Activated naive CD4-positive, alpha-beta T cell treated with anti-CD3 and anti-CD28 coated beads for 36 hours (primary cell): ENCODE measurements at regions of chr14 and their contacts with region 1.

Region 1: DNA sequence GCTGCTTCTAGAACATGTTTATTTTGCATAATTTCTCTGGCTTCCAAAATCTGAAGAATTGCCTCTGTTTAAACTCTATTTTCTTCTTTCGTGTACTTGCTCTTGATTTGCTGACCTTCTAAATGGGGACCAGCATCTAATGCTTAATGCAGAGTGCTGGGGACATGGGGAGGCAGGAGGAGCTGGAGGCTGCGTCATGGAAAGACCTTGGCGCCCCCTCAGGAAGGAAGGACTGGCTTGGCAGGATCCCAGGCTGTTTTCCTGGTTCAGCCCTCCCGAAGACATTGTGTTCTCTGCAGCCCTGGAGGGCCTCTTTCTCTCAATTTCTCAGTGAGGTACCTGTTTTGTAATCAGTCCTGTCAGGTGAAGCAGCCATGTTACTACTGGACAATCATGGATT is 5.5 kb downstream of the PRKCH start:
- DNase-seq: no peak
- H3K4me3 Mint-ChIP-seq: peak overlapping the region; percentile 63
- H3K27ac Mint-ChIP-seq: peak overlapping the region; percentile 95
- H3K4me1 Mint-ChIP-seq: peaks cover 70% of the 10 kb centered on the region
- H3K27me3 Mint-ChIP-seq: no peaks in the 10 kb centered on the region

Region 2: GRCh38 chr14:60488175-60488574 is 838.7 kb before region 1 on chr14:
- CTCF ChIA-PET with region 1: no interaction called
- intact Hi-C with region 1: no loop called
- DNase-seq: no peak
- H3K4me3 Mint-ChIP-seq: no peak overlapping the region
- H3K27ac Mint-ChIP-seq: no peak overlapping the region
- H3K4me1 Mint-ChIP-seq: peaks cover 2% of the 10 kb centered on the region
- H3K27me3 Mint-ChIP-seq: peaks cover 25% of the 10 kb centered on the region

Region 3: GRCh38 chr14:61280526-61281185 is 46.2 kb before region 1 on chr14:
- CTCF ChIA-PET with region 1: no interaction called
- intact Hi-C with region 1: no loop called
- DNase-seq: peak; percentile 81
- H3K4me3 Mint-ChIP-seq: peak overlapping the region; percentile 88
- H3K27ac Mint-ChIP-seq: peak overlapping the region; percentile 67
- H3K4me1 Mint-ChIP-seq: peaks cover 29% of the 10 kb centered on the region
- H3K27me3 Mint-ChIP-seq: no peaks in the 10 kb centered on the region

Region 4: GRCh38 chr14:61342486-61342885 is 15.6 kb after region 1 on chr14:
- CTCF ChIA-PET with region 1: interaction called, 4 read pairs
- intact Hi-C with region 1: loop called (anchors 1 kb)
- DNase-seq: peak; percentile 86
- H3K4me3 Mint-ChIP-seq: peak overlapping the region; percentile 66
- H3K27ac Mint-ChIP-seq: peak overlapping the region; percentile 97
- H3K4me1 Mint-ChIP-seq: peaks cover 96% of the 10 kb centered on the region
- H3K27me3 Mint-ChIP-seq: no peaks in the 10 kb centered on the region

Region 5: GRCh38 chr14:61368114-61368726 is 41.4 kb after region 1 on chr14:
- CTCF ChIA-PET with region 1: no interaction called
- intact Hi-C with region 1: no loop called
- DNase-seq: no peak
- H3K4me3 Mint-ChIP-seq: no peak overlapping the region
- H3K27ac Mint-ChIP-seq: peak overlapping the region; percentile 56
- H3K4me1 Mint-ChIP-seq: peaks cover 52% of the 10 kb centered on the region
- H3K27me3 Mint-ChIP-seq: no peaks in the 10 kb centered on the region

Region 6: GRCh38 chr14:61403411-61403810 is 76.6 kb after region 1 on chr14:
- CTCF ChIA-PET with region 1: no interaction called
- intact Hi-C with region 1: loop called (anchors 1 kb)
- DNase-seq: no peak
- H3K4me3 Mint-ChIP-seq: peak overlapping the region; percentile 63
- H3K27ac Mint-ChIP-seq: peak overlapping the region; percentile 91
- H3K4me1 Mint-ChIP-seq: peaks cover 86% of the 10 kb centered on the region
- H3K27me3 Mint-ChIP-seq: no peaks in the 10 kb centered on the region

Region 7: DNA sequence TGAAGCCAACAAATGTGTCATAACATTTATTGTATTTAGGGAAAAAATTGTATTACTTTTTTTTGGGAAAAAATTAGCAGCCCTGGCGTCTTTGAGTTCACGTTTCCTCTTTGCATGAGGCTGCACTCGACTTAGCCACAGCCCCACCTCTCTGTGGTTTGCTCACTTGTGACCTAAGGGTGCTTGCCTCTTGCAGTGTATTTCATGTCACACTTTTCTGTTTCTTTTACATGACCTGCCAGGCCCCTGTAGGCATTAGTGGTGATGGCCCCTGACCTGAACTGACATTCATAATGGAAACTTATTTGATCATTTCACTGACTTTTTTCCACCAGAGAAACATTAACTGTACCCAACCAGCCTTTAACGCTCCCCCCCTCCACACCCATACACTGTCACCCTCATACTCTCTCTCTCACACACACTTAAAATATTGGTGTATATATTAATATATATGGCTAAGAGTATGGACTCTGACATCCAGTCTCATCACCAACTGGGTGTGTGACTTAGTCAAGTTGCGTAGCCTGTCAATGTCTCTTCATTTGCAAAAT is 117.4 kb after region 1 on chr14:
- CTCF ChIA-PET with region 1: no interaction called
- intact Hi-C with region 1: loop called (anchors 1 kb)
- DNase-seq: peak; percentile 90
- H3K4me3 Mint-ChIP-seq: peak overlapping the region; percentile 66
- H3K27ac Mint-ChIP-seq: peak overlapping the region; percentile 96
- H3K4me1 Mint-ChIP-seq: peaks cover 93% of the 10 kb centered on the region
- H3K27me3 Mint-ChIP-seq: no peaks in the 10 kb centered on the region

Region 8: DNA sequence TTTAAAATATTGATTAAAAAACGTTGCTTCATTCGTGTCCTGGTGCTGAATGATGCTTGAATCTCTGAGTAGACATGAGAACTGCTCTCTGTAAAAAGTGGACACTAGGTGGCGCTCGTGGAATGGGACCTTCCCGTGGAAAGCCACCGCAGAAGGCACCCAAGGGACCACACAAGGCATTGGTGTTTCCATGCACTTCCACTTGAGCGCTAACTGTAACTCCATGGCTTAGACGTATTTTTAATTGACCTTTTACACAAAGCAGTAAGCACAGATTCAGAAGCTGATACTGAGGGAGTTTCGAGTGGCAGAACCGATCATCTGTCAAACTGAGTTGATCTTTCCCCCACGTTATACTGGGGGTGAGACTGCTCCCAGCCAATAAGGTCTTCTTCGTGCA is 129.9 kb after region 1 on chr14:
- CTCF ChIA-PET with region 1: no interaction called
- intact Hi-C with region 1: loop called (anchors 1 kb)
- DNase-seq: peak; percentile 94
- H3K4me3 Mint-ChIP-seq: no peak overlapping the region
- H3K27ac Mint-ChIP-seq: peak overlapping the region; percentile 66
- H3K4me1 Mint-ChIP-seq: peaks cover 82% of the 10 kb centered on the region
- H3K27me3 Mint-ChIP-seq: no peaks in the 10 kb centered on the region